ENCODE measurements at regions of chr18 and their contacts with region 1.

Region 1: GRCh38 chr18:63016270-63016669 is 300.9 kb downstream of the PHLPP1 start:
- DNase-seq: no peak

Region 2: DNA sequence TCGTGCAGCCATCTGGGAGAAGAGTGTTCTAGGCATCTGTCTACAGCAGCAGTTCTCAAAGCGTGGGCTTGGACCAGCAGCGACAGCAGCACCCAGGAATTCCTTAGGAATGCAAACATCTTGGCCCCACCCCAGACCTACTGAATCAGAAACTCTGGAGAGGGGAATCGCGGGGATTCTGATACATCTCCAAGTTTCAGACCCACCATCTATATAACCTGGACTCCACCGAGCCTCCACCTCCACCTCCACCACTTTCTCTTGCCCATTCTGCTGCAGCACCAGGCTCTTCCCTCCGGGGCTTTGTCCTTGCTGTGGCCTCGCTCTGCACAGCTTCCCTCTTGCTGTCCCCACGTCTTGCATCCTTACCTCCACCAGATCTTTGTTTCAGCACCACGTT is 46.9 kb after region 1 on chr18:
- intact Hi-C with region 1: no loop called
- DNase-seq: no peak

Region 3: DNA sequence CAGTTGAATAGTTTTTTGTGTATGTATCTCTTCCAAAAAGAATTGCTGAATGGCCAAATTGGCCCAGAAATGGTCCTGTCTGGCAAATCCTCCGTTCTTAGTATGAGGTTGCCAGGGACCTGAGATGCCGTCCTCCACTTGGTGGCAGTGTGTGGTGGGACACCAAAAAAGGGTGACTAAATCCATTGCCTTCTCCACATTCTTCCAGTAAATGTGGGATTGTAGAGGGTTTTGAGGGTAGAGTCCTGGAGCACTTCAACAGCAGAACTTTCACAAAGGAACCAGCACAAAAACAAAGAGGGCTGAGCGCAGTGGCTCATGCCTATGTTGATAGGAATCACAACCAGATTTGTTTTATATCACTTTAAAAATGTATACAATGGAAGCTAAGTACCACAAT is 103.4 kb after region 1 on chr18:
- intact Hi-C with region 1: loop called in 1 of 2 experiments (anchors 10 kb)
- DNase-seq: no peak

Region 4: DNA sequence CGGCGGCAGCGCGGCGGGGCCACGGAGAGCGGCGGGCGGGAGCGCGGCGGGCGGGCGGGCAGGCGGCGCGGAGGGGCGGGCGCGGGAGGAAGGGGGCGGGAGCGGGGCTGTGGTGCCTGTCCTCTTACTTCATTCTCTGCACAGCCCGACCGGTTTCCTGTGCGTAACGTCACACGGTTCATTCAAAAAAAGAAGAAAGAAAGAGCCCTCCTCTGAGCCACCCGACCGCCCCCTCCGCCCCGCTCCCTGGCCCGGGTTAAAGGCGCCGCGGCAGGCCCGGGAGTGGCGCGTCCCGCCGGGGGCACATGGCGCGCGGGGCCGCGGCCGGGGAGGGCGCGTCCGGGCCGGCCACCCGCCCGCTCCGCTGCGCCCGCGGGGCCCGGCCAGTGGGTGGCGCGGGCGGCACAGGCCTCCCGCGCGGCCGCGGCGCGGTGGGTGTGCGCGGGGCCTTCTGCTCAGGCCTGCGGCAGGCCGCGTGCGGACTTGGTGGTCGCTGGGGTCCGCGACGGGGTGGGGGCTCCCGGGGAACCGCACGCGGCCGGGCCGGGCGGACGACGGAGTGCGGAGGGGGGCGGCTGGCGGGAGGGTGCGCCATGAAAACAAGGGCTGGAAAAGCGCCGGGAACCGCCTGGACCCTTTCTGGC is 303.9 kb after region 1 on chr18:
- intact Hi-C with region 1: loop called (anchors 5 kb)
- DNase-seq: peak; percentile 94

Region 5: GRCh38 chr18:63439334-63439733 is 423.1 kb after region 1 on chr18:
- intact Hi-C with region 1: loop called (anchors 5 to 10 kb)
- DNase-seq: no peak

Region 6: DNA sequence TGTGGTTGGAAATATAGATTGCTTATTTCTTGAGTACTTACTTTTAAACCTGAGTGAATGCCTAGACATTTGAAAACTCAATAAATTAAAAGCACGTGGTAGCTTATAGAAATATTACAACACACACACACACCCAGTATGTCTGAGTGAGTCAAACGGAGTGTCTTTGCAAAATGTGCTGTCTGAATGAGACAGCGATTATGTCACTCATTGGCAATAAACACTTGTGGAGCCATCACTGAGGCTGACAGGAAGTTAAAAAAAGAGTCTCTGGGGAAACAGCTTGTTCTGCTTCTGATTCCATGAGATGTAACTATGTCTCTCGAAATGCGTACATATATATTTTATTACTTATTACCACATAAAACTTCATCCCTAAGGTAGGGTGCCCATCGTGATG is 428.3 kb after region 1 on chr18:
- intact Hi-C with region 1: loop called (anchors 5 to 10 kb)
- DNase-seq: no peak